ENCODE measurements at regions of chr1 and their contacts with region 1.

Region 1: DNA sequence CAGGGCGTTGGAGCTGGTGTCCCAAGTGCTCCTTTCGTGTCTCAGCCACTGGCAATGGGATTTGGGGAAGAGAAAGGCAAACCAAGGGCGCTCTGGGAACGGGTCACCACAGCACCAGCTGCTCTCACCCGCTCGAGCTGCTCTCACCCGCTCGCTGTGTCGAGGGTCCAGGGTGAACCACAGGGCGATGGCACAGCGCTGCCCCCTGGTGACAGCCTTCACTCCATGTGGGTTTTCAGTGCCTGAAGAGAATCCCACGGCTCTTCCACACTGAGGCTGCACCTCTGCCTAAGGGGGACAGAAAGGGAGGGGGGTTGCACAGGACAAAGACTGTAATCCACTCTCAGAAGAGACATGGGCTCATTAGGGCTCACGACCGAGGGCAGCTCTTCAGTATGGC is 7.1 kb upstream of the CLDN19 start:
- DNase-seq: peak; percentile 74
- ATAC-seq: peak; percentile 75

Region 2: DNA sequence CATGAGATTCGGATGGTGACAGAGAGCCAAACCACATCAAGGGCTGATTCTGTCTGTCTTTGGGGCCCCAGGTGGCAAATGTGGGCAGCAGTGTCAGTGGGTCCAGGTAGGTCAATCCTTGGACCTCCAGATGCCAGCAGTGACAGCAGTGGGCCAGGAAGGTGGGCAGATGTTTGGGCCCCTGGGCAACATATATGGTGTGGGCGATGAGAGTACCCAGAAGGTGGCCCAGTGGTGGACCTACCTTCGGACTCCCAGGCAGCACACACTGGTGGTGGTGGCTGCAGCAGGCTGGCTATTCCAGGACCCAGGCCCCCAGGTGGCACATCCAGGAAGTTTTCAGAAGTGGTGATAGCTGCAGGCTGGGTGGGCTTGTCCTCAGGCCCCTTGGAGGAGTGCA is 666.2 kb before region 1 on chr1:
- intact Hi-C with region 1: no loop called
- DNase-seq: no peak
- ATAC-seq: no peak

Region 3: GRCh38 chr1:42576935-42577334 is 170.2 kb before region 1 on chr1:
- intact Hi-C with region 1: loop called (anchors 10 kb)
- DNase-seq: no peak
- ATAC-seq: no peak